Pancreas (tissue), 10 donors: ENCODE measurements at regions of chr3 and their contacts with region 1.

Region 1: DNA sequence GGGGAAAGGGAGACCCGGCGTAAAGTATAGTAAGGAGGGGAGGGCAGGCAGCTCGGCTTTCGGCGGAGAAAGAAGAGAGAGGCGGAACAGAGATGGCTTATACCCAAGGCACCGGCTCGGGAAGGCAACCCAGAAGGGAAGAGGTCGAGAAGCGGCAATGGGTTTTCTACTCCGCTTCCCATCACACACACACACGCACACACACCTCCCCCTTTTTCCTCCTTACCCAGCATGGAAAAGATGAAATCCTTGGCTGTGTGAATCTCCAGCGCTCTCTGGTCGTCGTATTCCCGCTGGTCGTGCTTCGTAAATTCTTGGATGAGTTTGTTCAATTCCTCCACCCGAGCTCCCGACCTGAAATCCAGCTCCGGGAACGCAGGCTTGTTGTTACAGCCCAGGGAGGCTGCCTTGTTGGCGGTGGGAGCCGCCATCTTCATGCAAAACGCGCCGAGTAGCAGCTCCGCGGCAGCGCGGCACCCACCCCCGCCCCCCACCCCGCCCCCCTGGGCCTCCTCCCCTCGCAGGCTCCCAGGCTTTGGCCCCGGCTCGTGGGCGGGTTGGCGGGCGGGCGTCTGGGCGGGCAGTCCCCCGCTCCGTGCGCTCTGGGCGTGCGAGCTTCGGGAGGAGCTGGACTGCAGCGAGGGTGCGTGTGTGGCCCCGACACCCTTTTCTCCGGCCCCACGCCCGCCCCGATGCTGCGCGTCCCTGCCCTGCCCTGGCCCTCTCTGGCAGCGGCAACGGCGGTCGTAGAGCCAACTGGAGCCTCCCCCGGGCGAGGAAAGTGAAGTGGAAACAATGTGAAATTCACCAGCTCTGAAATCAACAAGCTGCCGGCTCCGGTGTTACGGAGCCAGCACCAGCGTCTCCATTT is at the start of gene MB21D2:
- DNase-seq: peak; percentile 49 to 81 (median 68)
- ATAC-seq: peak; percentile 74 to 86 (median 82)
- H3K4me3 ChIP-seq: peak within 1 kb of the TSS; percentile 54 to 77 (median 67)
- H3K27ac ChIP-seq: peak within 1 kb of the TSS; percentile 68 to 92 (median 76)
- H3K4me1 ChIP-seq: peaks cover 0 to 6% (median 0%) of the 10 kb centered on the region in 3 donors
- H3K27me3 ChIP-seq: no peaks in the 10 kb centered on the region
- CTCF ChIP-seq: no peak
- total RNA-seq, gene MB21D2: 0.37 to 2.3 (median 0.94) TPM

Region 2: GRCh38 chr3:192851821-192852424 is 65.7 kb before region 1 on chr3:
- intact Hi-C with region 1: loop called in 1 of 3 experiments (anchors 10 kb)
- DNase-seq: peak; percentile 83 to 90 (median 86)
- ATAC-seq: peak; percentile 94 to 97 (median 94)
- H3K4me3 ChIP-seq: no peak overlapping the region
- H3K27ac ChIP-seq: peak overlapping the region in 2 of 4 donors; percentile 10 to 22
- H3K4me1 ChIP-seq: peaks cover 11 to 16% (median 14%) of the 10 kb centered on the region in 3 donors
- H3K27me3 ChIP-seq: no peaks in the 10 kb centered on the region
- CTCF ChIP-seq: no peak